GM18951 (cell line): ENCODE measurements at regions of chr22 and their contacts with region 1.

Region 1: GRCh38 chr22:30763815-30764686 is 69.4 kb downstream of the OSBP2 start:
- POLR2A ChIP-seq: no peak

Region 2: DNA sequence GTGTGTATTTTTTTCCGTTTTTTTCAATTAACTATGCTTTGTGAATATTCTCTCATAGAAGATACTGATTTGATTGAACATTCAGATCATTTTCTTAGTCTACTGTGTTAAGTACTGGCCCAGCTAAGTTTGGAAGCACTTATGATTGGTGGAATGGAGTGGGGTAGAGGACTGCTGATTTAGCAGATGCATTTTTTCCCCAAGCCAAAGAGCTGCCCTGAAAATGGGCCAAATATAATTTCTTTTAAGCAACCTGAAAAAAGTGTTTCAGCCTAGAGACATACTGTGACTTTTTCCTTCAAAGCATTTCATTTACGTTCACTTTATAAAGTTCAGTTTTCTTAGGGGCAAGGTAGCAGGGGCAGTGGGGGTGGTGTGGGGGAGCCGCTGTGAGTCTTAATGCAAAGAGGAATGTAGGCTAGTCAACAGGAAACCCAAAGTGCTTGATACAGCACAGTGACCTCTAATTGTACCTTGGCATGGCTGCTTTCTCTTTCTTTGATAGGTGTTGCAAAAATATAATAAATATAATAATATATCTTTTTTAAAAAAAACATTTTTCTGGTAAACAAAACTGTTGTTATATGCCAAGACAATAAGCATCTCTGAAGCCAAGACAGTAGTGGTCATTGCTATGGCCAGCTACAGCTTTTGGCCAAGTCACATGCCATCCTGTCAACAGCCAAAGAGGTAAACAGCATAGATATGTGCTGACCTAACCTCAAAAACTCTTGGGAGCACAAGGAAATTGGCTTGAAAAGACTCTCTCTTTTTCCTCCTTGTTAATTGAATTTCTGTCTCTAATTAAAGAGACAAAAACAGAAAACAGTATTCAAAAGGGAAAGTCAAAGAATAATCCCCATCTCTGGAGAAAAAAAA is 576.3 kb before region 1 on chr22:
- in situ Hi-C with region 1: no loop called
- POLR2A ChIP-seq: no peak

Region 3: GRCh38 chr22:30910358-30910757 is 146.3 kb after region 1 on chr22:
- in situ Hi-C with region 1: loop called (anchors 10 kb)
- POLR2A ChIP-seq: no peak